IMR-90 (cell line): ENCODE measurements at regions of chr5 and their contacts with region 1.

Region 1: GRCh38 chr5:78483809-78484521 is 123.5 kb downstream of the SCAMP1 start:
- DNase-seq: peak; percentile 77
- ATAC-seq: peak; percentile 85
- H3K4me3 ChIP-seq: no peak overlapping the region
- H3K27ac ChIP-seq: no peak overlapping the region
- H3K4me1 ChIP-seq: peaks cover 2% of the 10 kb centered on the region
- H3K27me3 ChIP-seq: no peaks in the 10 kb centered on the region
- CTCF ChIP-seq: no peak
- POLR2A ChIP-seq: no peak
- RAD21 ChIP-seq: no peak

Region 2: GRCh38 chr5:78497573-78498533 is 13.9 kb after region 1 on chr5:
- CTCF ChIA-PET with region 1: no interaction called
- POLR2A ChIA-PET with region 1: no interaction called
- dilution Hi-C with region 1: no loop called
- in situ Hi-C with region 1: no loop called
- intact Hi-C with region 1: loop called (anchors 1 kb)
- DNase-seq: no peak
- ATAC-seq: 0 out of 2 replicates have a peak, but pooled peaks have one; percentile 4
- H3K4me3 ChIP-seq: no peak overlapping the region
- H3K27ac ChIP-seq: no peak overlapping the region
- H3K4me1 ChIP-seq: peaks cover 21% of the 10 kb centered on the region
- H3K27me3 ChIP-seq: no peaks in the 10 kb centered on the region
- CTCF ChIP-seq: no peak
- POLR2A ChIP-seq: no peak
- RAD21 ChIP-seq: no peak